CD4-positive, alpha-beta memory T cell (primary cell): ENCODE measurements at regions of chr20 and their contacts with region 1.

Region 1: DNA sequence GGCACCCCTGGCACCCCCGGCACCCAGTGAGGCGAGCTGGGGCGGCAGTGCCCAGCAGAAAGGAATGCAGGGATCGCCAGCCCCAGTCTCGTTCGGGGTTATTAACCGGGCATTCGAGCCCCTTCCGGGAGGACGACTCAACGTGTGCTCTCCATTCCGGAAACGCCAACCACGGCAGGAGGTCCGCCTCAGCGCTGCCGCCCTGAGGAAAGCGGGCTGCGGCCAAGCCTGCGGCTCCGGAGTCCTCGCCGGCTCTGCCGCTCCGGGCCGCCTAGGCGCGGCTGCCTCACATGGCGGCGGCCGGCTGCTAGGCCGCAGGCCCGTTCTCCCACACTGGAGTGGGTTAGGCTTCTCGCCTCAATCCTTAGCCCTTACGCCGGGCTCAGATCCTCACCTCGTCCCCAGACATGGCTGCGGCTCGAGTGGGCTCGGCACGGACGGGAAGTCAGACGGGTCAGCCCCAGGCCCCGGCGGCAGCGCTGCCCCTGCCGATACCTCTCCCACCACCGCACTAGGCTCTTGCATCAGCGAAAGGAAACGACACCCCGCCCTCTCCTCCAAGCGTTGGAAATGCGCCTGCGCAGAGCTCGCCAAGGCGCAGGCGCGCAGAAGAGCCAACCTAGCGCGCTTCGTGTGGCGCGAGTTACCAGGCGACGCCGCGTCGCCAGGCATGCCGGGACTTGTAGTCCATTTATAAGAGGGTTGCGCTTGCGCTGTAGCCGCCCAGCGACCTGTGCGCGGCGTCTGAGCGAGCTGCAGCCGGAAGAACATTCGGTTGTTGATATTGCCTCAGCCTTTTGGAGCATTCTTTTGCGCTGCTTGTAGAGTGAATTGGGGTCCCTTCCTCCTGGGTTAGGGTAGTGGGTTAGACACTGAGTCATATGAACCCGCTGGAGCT is at the start of gene EIF2S2:
- DNase-seq: peak; percentile 93 to 97 (median 97)
- H3K4me3 ChIP-seq: peak within 1 kb of the TSS; percentile 92 to 94
- H3K4me3 Mint-ChIP-seq: peak within 1 kb of the TSS; percentile 90 to 99 (median 94)
- H3K27ac ChIP-seq: peak within 1 kb of the TSS; percentile 95
- H3K27ac Mint-ChIP-seq: peak within 1 kb of the TSS; percentile 91 to 99 (median 96)
- H3K4me1 ChIP-seq: peaks cover 47% of the 10 kb centered on the region
- H3K4me1 Mint-ChIP-seq: peaks cover 32 to 52% (median 40%) of the 10 kb centered on the region in 4 donors
- H3K27me3 ChIP-seq: no peaks in the 10 kb centered on the region
- H3K27me3 Mint-ChIP-seq: no peaks in the 10 kb centered on the region
- total RNA-seq, gene EIF2S2: 52.2 to 53.1 TPM

Region 2: GRCh38 chr20:33489495-33490022 is 622.4 kb before region 1 on chr20:
- CTCF ChIA-PET with region 1: no interaction called
- POLR2A ChIA-PET with region 1: interaction called, 14 read pairs
- intact Hi-C with region 1: no loop called
- DNase-seq: peak; percentile 98 to 99 (median 99)
- H3K4me3 ChIP-seq: peak overlapping the region; percentile 61 to 70
- H3K4me3 Mint-ChIP-seq: peak overlapping the region; percentile 81 to 96 (median 86)
- H3K27ac ChIP-seq: peak overlapping the region; percentile 89
- H3K27ac Mint-ChIP-seq: peak overlapping the region; percentile 92 to 95 (median 94)
- H3K4me1 ChIP-seq: peaks cover 16% of the 10 kb centered on the region
- H3K4me1 Mint-ChIP-seq: peaks cover 8 to 24% (median 18%) of the 10 kb centered on the region in 4 donors
- H3K27me3 ChIP-seq: no peaks in the 10 kb centered on the region
- H3K27me3 Mint-ChIP-seq: no peaks in the 10 kb centered on the region

Region 3: GRCh38 chr20:33731693-33732165 is 380.2 kb before region 1 on chr20 and contains the start of gene ZNF341:
- CTCF ChIA-PET with region 1: no interaction called
- POLR2A ChIA-PET with region 1: interaction called, 8 read pairs
- intact Hi-C with region 1: loop called (anchors 1 kb)
- DNase-seq: peak in 4 of 5 donors; percentile 88 to 91 (median 90)
- H3K4me3 ChIP-seq: peak within 1 kb of the TSS; percentile 64 to 69
- H3K4me3 Mint-ChIP-seq: peak within 1 kb of the TSS; percentile 89 to 94 (median 93)
- H3K27ac ChIP-seq: peak within 1 kb of the TSS; percentile 64
- H3K27ac Mint-ChIP-seq: peak within 1 kb of the TSS; percentile 92 to 98 (median 96)
- H3K4me1 ChIP-seq: peaks cover 21% of the 10 kb centered on the region
- H3K4me1 Mint-ChIP-seq: peaks cover 10 to 25% (median 19%) of the 10 kb centered on the region in 4 donors
- H3K27me3 ChIP-seq: no peaks in the 10 kb centered on the region
- H3K27me3 Mint-ChIP-seq: no peaks in the 10 kb centered on the region
- total RNA-seq, gene ZNF341: 4.8 to 5.0 TPM

Region 4: DNA sequence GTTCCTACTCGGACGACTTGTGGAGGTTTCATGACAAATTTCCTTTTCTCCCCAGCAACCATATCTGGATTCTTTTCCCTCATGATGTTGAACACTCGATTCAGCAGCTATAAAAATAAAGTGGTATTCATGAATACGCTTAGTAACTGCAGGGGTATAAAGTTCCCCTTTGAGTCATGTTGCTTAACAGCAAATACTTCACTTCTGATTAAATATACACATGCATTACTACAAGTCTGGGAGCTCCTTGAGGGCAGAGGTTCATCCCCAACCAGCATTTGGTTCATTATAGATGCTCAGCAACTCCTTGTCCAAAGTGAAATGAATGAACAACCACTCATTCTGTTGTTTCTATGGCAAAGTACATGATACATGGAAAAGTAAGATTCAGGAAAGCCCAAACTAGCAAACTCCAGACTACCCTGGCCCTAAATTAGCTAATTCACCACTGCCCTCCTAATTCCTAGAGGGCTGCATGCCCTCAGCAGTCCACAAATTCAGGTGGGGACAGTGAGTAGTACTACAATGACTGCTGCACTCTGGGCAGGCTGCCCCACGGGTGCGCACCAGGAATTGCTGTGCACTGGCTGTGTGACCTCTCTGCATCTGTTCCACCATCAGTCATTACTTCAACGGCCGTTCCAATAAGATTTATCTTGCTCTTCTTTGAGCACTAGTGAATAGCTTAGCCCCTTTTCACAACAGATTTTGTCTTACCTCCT is 15.1 kb before region 1 on chr20:
- CTCF ChIA-PET with region 1: interaction called, 3 read pairs
- POLR2A ChIA-PET with region 1: interaction called, 15 read pairs
- intact Hi-C with region 1: no loop called
- DNase-seq: no peak
- H3K4me3 ChIP-seq: no peak overlapping the region
- H3K4me3 Mint-ChIP-seq: no peak overlapping the region
- H3K27ac ChIP-seq: no peak overlapping the region
- H3K27ac Mint-ChIP-seq: peak overlapping the region in 5 of 7 donors; percentile 38 to 77 (median 46)
- H3K4me1 ChIP-seq: no peaks in the 10 kb centered on the region
- H3K4me1 Mint-ChIP-seq: peaks cover 4 to 14% (median 9%) of the 10 kb centered on the region in 4 donors
- H3K27me3 ChIP-seq: no peaks in the 10 kb centered on the region
- H3K27me3 Mint-ChIP-seq: no peaks in the 10 kb centered on the region

Region 5: GRCh38 chr20:34302723-34303528 is 191.0 kb after region 1 on chr20 and contains the start of gene AHCY:
- CTCF ChIA-PET with region 1: no interaction called
- POLR2A ChIA-PET with region 1: interaction called, 7 read pairs
- intact Hi-C with region 1: loop called (anchors 5 kb)
- DNase-seq: peak; percentile 90 to 95 (median 93)
- H3K4me3 ChIP-seq: peak within 1 kb of the TSS; percentile 86 to 94
- H3K4me3 Mint-ChIP-seq: peak within 1 kb of the TSS; percentile 90 to 98 (median 95)
- H3K27ac ChIP-seq: peak within 1 kb of the TSS; percentile 81
- H3K27ac Mint-ChIP-seq: peak within 1 kb of the TSS; percentile 87 to 98 (median 97)
- H3K4me1 ChIP-seq: peaks cover 11% of the 10 kb centered on the region
- H3K4me1 Mint-ChIP-seq: peaks cover 9 to 26% (median 10%) of the 10 kb centered on the region in 4 donors
- H3K27me3 ChIP-seq: no peaks in the 10 kb centered on the region
- H3K27me3 Mint-ChIP-seq: no peaks in the 10 kb centered on the region
- total RNA-seq, gene AHCY: 23.1 to 24.2 TPM